Thyroid gland (tissue), 4 donors: ENCODE measurements at regions of chr6 and their contacts with region 1.

Region 1: GRCh38 chr6:123715006-123715875 is 78.5 kb upstream of the TRDN start:
- DNase-seq: peak in 1 of 2 donors; percentile 15
- H3K4me3 ChIP-seq: no peak overlapping the region
- H3K27ac ChIP-seq: no peak overlapping the region
- H3K4me1 ChIP-seq: no peaks in the 10 kb centered on the region
- H3K27me3 ChIP-seq: no peaks in the 10 kb centered on the region
- CTCF ChIP-seq: peak in 5 of 6 experiments; percentile 27 to 63 (median 58)
- POLR2A ChIP-seq: no peak

Region 2: DNA sequence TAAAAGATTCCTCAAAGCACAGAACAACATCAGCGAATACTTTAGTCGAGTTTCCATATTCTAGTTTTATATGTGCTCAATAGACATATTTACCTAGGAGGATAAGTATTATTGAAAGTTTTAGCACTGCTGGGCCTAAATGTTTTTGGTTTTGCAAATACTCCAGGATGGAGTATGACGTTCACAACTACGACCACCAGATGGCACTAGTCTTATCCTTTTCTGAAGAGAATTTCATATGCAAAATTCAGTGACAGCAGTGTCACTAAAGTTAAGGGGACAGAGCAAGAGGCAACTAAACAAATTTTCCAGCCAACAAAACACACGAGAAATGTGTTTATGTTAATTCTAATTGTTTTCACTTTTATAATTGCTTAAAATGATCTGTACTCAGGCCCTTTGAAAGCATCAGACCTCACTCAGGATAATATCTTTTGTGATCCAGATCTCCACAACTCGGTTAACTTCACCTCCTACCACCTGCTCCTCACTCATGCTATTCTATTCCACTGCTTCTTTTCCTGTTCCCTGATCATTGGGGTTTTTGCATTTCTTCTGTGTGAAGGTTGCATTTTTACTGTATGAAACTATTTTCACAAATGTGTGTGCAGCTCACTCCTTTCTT is 299.3 kb before region 1 on chr6:
- intact Hi-C with region 1: loop called (anchors 5 kb)
- DNase-seq: peak; percentile 57 to 62
- H3K4me3 ChIP-seq: no peak overlapping the region
- H3K27ac ChIP-seq: no peak overlapping the region
- H3K4me1 ChIP-seq: no peaks in the 10 kb centered on the region
- H3K27me3 ChIP-seq: no peaks in the 10 kb centered on the region
- CTCF ChIP-seq: peak in 5 of 6 experiments; percentile 15 to 78 (median 63)
- POLR2A ChIP-seq: no peak

Region 3: DNA sequence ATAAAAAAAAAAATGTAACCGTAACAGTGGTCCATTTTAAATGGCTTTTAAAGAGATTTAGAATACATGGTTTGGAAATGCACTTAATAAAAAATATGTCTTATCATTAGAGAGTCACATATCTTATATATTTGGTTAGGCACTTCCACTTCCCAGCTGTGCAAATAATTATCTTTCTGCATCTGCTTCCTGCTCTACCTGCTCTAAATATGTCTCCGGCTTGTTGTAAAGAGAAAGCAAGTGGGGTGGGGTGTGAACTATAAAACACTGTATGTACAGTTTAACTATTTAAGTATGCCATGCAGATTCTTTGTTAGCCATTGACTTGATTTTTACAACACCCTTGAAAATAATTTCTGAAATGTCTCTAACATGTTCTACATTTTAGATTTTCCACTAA is 194.7 kb after region 1 on chr6:
- intact Hi-C with region 1: no loop called
- DNase-seq: no peak
- H3K4me3 ChIP-seq: no peak overlapping the region
- H3K27ac ChIP-seq: no peak overlapping the region
- H3K4me1 ChIP-seq: no peaks in the 10 kb centered on the region
- H3K27me3 ChIP-seq: no peaks in the 10 kb centered on the region
- CTCF ChIP-seq: no peak
- POLR2A ChIP-seq: no peak